Activated B cell treated with CpG ODN at 0.5 μM for 24 hours (primary cell): ENCODE measurements at regions of chr2 and their contacts with region 1.

Region 1: DNA sequence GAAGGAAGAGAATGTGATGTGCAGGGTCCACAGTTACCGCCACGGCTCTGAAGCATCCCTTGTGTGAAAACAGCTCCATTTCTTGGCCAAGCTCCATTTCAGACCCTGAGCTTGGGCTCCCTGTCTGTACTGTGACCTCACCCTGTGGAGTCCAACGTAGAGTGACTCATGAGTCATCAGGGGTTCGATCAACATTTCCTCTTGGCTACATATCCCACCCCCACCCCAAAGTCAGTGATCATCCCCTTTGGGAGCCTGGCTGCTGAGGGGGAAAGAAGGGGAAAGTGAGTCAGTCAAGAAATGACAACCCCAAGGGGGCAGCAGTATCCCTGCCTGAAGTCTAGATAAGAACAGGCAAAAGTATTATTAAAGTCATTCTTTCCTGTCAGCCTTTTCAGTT is 62.2 kb downstream of the PAPOLG start:
- DNase-seq: no peak
- ATAC-seq: peak; percentile 72
- H3K4me3 Mint-ChIP-seq: peak overlapping the region; percentile 50
- H3K27ac Mint-ChIP-seq: peak overlapping the region; percentile 67
- H3K4me1 Mint-ChIP-seq: peaks cover 50% of the 10 kb centered on the region
- H3K27me3 Mint-ChIP-seq: no peaks in the 10 kb centered on the region
- CTCF ChIP-seq: no peak

Region 2: GRCh38 chr2:60634438-60634837 is 183.8 kb before region 1 on chr2:
- CTCF ChIA-PET with region 1: no interaction called
- POLR2A ChIA-PET with region 1: no interaction called
- intact Hi-C with region 1: no loop called
- DNase-seq: no peak
- ATAC-seq: no peak
- H3K4me3 Mint-ChIP-seq: no peak overlapping the region
- H3K27ac Mint-ChIP-seq: no peak overlapping the region
- H3K4me1 Mint-ChIP-seq: no peaks in the 10 kb centered on the region
- H3K27me3 Mint-ChIP-seq: peaks cover 12% of the 10 kb centered on the region
- CTCF ChIP-seq: no peak

Region 3: DNA sequence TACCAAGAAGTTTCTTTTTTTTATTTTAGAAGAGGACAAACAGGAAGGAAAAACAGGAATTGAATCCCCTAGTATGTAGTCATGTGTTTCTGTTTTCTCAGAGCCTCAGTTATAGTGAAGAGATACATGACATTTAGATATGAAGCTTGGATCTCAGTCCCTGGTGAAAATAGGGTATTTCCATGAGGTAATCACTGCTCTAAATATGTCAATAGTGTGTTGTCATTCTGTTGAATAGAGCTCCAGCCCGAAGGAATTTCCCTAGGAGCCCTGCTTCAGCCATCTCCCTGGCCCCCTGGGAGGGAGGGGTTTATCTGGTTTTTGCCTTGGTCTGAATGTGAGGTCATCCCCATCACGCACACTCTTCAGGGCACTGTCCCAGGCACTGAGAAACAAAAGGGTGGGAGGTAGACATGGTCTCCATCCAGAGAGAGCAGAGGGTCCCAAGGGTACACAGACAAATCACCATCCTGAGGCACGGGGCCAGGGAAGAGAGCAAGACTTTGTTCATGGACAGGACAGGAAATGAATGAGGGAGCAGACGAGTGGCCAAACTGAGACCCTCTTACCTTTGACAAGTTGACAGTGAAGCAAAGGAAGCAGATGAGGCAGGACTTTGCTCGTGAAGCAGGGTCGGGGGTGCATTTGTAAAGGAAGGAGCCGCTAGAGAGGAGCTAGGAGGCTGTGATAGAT is 16.1 kb after region 1 on chr2:
- CTCF ChIA-PET with region 1: interaction called, 21 read pairs
- POLR2A ChIA-PET with region 1: interaction called, 16 read pairs
- intact Hi-C with region 1: no loop called
- DNase-seq: no peak
- ATAC-seq: peak; percentile 71
- H3K4me3 Mint-ChIP-seq: peak overlapping the region; percentile 44
- H3K27ac Mint-ChIP-seq: peak overlapping the region; percentile 92
- H3K4me1 Mint-ChIP-seq: peaks cover 75% of the 10 kb centered on the region
- H3K27me3 Mint-ChIP-seq: no peaks in the 10 kb centered on the region
- CTCF ChIP-seq: no peak

Region 4: DNA sequence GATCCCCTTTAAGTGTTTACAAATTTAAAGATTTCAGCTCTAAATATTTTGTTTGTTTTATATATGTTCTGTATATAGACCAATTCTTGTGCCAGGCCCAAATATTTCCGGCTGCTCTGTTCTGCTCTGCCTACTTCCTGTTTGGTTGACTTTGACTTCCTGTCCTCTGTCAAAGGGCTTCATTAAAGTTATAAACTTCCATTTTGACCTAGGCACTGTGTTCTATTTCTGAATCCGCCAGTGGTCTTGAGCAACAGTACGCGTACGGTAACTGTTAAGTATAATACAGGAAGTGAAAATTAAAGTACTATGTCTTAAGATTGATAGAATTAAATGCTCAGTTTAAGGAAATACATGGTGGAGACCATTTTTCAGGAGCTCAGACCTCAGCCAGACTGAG is 49.6 kb after region 1 on chr2:
- CTCF ChIA-PET with region 1: interaction called, 5 read pairs
- POLR2A ChIA-PET with region 1: interaction called, 12 read pairs
- intact Hi-C with region 1: no loop called
- DNase-seq: no peak
- ATAC-seq: peak; percentile 87
- H3K4me3 Mint-ChIP-seq: peak overlapping the region; percentile 71
- H3K27ac Mint-ChIP-seq: peak overlapping the region; percentile 96
- H3K4me1 Mint-ChIP-seq: peaks cover 65% of the 10 kb centered on the region
- H3K27me3 Mint-ChIP-seq: no peaks in the 10 kb centered on the region
- CTCF ChIP-seq: no peak

Region 5: GRCh38 chr2:60891180-60891579 is 72.9 kb after region 1 on chr2:
- CTCF ChIA-PET with region 1: interaction called, 5 read pairs
- POLR2A ChIA-PET with region 1: interaction called, 5 read pairs
- intact Hi-C with region 1: loop called (anchors 2 kb)
- DNase-seq: no peak
- ATAC-seq: peak; percentile 72
- H3K4me3 Mint-ChIP-seq: peak overlapping the region; percentile 69
- H3K27ac Mint-ChIP-seq: peak overlapping the region; percentile 80
- H3K4me1 Mint-ChIP-seq: peaks cover 60% of the 10 kb centered on the region
- H3K27me3 Mint-ChIP-seq: no peaks in the 10 kb centered on the region
- CTCF ChIP-seq: no peak